GM12878 (cell line): ENCODE measurements at regions of chr14 and their contacts with region 1.

Region 1: GRCh38 chr14:70665191-70665916 is 23.6 kb downstream of the TTC9 start:
- DNase-seq: peak; percentile 90
- ATAC-seq: peak; percentile 73
- H3K4me3 ChIP-seq: peak overlapping the region; percentile 31; the same call in 1 of the 2 replicates
- H3K27ac ChIP-seq: peak overlapping the region; percentile 89
- H3K4me1 ChIP-seq: peaks cover 87% of the 10 kb centered on the region
- H3K27me3 ChIP-seq: no peaks in the 10 kb centered on the region
- CTCF ChIP-seq: no peak
- EP300 ChIP-seq: peak in 1 of 2 experiments; percentile 72; a peak in 1 of 4 replicates
- POLR2A ChIP-seq: 0 out of 2 replicates have a peak, but pooled peaks have one; percentile 39
- RAD21 ChIP-seq: no peak

Region 2: DNA sequence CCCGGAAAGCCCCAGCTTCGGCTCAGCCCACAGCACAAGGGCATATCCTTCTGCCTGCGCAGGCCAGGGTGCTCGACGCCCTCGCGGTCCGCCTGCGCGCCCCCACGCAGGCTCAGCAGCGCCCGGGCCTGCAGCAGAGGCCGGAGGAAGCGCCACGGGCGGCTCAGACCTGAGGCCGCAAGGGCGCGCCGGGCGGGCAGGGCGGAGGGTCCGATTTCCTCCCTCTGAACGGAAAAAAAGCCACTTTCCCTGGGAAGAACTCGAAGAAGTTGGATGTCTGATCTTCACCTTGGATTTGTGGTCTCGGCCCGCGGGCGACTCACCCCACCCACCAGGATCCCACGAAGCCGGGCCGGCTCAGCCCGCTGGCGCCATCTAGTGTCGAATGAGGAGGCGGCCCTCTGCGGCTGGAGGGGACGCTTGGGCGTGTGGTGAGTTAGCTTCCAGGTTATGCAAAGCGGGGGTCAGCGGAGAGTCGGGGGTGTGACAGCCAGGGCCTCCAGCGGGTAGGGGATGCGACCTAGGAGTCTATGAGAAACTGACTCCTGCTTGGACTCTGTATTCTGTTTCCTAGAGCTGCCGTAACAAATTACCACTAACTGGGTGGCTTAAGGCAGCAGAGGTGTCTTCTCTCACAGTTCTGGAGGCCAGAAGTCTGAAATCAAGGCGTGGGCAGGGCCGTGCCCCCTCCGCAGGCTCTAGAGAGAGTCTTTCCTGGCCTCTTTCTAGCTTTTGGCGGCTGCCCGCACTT is 938.4 kb before region 1 on chr14:
- CTCF ChIA-PET with region 1: no interaction called
- POLR2A ChIA-PET with region 1: no interaction called
- RAD21 ChIA-PET with region 1: no interaction called
- SMC1A ChIA-PET with region 1: no interaction called
- in situ Hi-C with region 1: no loop called
- intact Hi-C with region 1: no loop called
- DNase-seq: peak; percentile 19
- ATAC-seq: peak; percentile 97
- H3K4me3 ChIP-seq: peak overlapping the region; percentile 58; the same call in 1 of the 2 replicates
- H3K27ac ChIP-seq: no peak overlapping the region
- H3K4me1 ChIP-seq: peaks cover 4% of the 10 kb centered on the region; the same call in 1 of the 2 replicates
- H3K27me3 ChIP-seq: no peaks in the 10 kb centered on the region
- CTCF ChIP-seq: peak; percentile 94 to 98 (median 96)
- EP300 ChIP-seq: no peak
- POLR2A ChIP-seq: no peak
- RAD21 ChIP-seq: peak; percentile 99

Region 3: GRCh38 chr14:70640938-70641547 is 24.3 kb before region 1 on chr14:
- CTCF ChIA-PET with region 1: interaction called, 20 read pairs
- POLR2A ChIA-PET with region 1: interaction called, 145 read pairs
- RAD21 ChIA-PET with region 1: interaction called, 71 read pairs
- SMC1A ChIA-PET with region 1: interaction called, 254 read pairs
- in situ Hi-C with region 1: no loop called
- intact Hi-C with region 1: loop called (anchors 2 kb)
- DNase-seq: peak; percentile 60
- ATAC-seq: peak; percentile 77
- H3K4me3 ChIP-seq: peak overlapping the region; percentile 90
- H3K27ac ChIP-seq: peak overlapping the region; percentile 88
- H3K4me1 ChIP-seq: no peaks in the 10 kb centered on the region
- H3K27me3 ChIP-seq: no peaks in the 10 kb centered on the region
- CTCF ChIP-seq: peak in 2 of 3 experiments; percentile 10 to 14; a peak in 2 of 6 replicates
- EP300 ChIP-seq: 0 out of 4 replicates have a peak, but pooled peaks of 1 of the 2 experiments have one; percentile 32
- POLR2A ChIP-seq: peak; percentile 76
- RAD21 ChIP-seq: no peak

Region 4: GRCh38 chr14:70646705-70647104 is 18.6 kb before region 1 on chr14:
- CTCF ChIA-PET with region 1: interaction called, 20 read pairs
- POLR2A ChIA-PET with region 1: interaction called, 145 read pairs
- RAD21 ChIA-PET with region 1: interaction called, 149 read pairs
- SMC1A ChIA-PET with region 1: interaction called, 254 read pairs
- in situ Hi-C with region 1: no loop called
- intact Hi-C with region 1: loop called (anchors 2 kb)
- DNase-seq: no peak
- ATAC-seq: no peak
- H3K4me3 ChIP-seq: peak overlapping the region; percentile 90
- H3K27ac ChIP-seq: peak overlapping the region; percentile 24; the same call in 1 of the 2 replicates
- H3K4me1 ChIP-seq: peaks cover 4% of the 10 kb centered on the region
- H3K27me3 ChIP-seq: no peaks in the 10 kb centered on the region
- CTCF ChIP-seq: no peak
- EP300 ChIP-seq: no peak
- POLR2A ChIP-seq: no peak
- RAD21 ChIP-seq: no peak

Region 5: DNA sequence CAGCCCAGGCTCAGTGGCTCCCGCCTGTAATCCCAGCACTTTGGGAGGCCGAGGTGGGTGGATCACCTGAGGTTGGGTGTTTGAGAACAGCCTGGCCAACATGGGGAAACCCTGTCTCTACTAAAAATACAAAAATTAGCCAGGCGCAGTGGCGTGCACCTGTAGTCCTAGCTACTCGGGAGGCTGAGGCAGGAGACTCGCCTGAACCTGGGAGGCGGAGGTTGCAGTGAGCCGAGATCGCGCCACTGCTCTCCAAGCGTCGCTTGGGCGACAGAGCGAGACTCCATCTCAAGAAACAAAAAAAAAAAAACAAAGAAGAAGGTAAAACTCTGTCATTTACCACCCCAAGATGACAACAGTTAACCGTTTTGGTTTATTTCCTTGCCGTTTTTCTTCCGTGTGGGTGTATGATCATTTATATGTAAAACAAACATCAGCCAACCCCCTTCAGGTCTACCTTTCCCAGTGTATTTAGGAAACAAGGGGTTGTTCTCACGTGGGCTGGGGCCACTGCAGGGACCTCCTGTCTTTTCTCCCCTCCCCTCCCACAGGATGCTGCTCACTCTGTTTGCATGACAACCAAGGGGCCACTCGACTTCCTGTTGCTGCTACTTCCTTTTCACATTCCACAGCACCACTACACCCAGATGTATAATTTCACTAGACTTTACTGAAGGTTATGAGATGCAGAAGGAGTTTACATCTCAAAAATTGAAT is 10.1 kb before region 1 on chr14:
- CTCF ChIA-PET with region 1: interaction called, 66 read pairs
- POLR2A ChIA-PET with region 1: interaction called, 95 read pairs
- RAD21 ChIA-PET with region 1: interaction called, 149 read pairs
- SMC1A ChIA-PET with region 1: interaction called, 125 read pairs
- in situ Hi-C with region 1: no loop called
- intact Hi-C with region 1: no loop called
- DNase-seq: peak; percentile 88
- ATAC-seq: peak; percentile 87
- H3K4me3 ChIP-seq: peak overlapping the region; percentile 61
- H3K27ac ChIP-seq: peak overlapping the region; percentile 99
- H3K4me1 ChIP-seq: peaks cover 73% of the 10 kb centered on the region
- H3K27me3 ChIP-seq: no peaks in the 10 kb centered on the region
- CTCF ChIP-seq: no peak
- EP300 ChIP-seq: peak in 1 of 2 experiments; percentile 21; a peak in 1 of 4 replicates
- POLR2A ChIP-seq: 0 out of 2 replicates have a peak, but pooled peaks have one; percentile 35
- RAD21 ChIP-seq: no peak

Region 6: DNA sequence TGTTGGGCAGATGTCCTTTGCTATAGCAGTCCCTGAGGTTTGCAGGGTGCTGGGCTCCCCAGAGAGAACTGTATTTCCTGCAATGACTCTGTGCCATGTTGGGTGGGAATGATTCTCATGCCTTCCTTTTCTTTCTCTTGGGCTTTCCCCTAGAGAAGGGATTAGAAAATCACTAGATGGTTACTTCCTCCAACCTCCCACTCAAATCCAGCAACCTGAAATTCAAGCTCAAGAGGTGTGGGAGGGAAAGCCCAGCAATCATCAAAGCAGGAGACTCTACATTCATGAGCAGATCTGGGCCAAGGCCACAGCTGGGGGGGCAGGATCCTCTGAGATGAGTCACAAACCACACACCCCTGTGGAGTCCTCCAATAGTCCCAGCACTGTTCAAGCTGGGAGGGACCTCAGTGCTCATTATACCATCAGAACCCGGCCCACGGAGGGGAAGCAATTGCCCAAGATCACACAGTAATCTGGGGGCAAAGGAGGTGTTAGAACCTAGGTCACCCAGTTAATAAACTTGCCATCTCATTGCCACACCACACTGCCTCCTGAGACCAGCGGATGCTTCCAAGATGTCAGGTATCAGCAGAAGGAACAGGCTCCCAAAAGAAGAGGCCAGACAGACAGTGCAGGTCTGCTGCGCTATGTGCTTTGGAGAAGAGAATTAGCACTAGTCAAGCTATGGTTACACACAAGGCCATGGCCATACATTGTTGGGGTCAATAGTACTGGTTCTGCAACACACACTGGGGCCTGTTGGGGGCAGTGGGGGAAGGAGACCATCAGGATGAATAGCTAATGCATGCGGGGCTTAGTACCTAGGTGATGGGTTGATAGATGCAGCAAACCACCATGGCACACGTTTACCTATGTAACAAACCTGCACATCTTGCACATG is 42.0 kb after region 1 on chr14:
- CTCF ChIA-PET with region 1: interaction called, 25 read pairs
- POLR2A ChIA-PET with region 1: interaction called, 11 read pairs
- RAD21 ChIA-PET with region 1: interaction called, 66 read pairs
- SMC1A ChIA-PET with region 1: interaction called, 154 read pairs
- in situ Hi-C with region 1: no loop called
- intact Hi-C with region 1: loop called (anchors 1 kb)
- DNase-seq: peak; percentile 93
- ATAC-seq: peak; percentile 97
- H3K4me3 ChIP-seq: no peak overlapping the region
- H3K27ac ChIP-seq: peak overlapping the region; percentile 76
- H3K4me1 ChIP-seq: peaks cover 20% of the 10 kb centered on the region
- H3K27me3 ChIP-seq: no peaks in the 10 kb centered on the region
- CTCF ChIP-seq: no peak
- EP300 ChIP-seq: peak; percentile 37 to 50; a peak in 1 of 4 replicates
- POLR2A ChIP-seq: no peak
- RAD21 ChIP-seq: 0 out of 2 replicates have a peak, but pooled peaks have one; percentile 2

Region 7: DNA sequence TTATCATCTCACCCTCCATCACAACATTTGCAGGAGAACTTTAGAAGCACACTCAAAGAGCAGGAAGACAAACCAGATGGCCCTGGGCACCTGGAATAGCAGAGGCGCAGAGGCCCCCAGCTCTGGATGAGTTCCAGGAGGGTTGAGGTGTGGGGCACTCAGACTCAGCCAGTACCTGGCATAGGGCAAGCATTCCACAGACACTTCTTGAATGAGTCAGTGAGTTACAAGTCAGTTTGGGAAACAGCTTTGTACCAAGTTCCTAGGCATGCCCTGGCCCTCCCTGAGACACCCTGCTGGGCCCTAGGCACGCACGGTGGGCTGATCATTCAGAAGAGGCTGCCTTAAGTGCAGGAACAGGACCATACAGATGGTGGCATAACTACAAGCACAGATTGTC is 89.6 kb after region 1 on chr14:
- CTCF ChIA-PET with region 1: no interaction called
- POLR2A ChIA-PET with region 1: no interaction called
- RAD21 ChIA-PET with region 1: no interaction called
- SMC1A ChIA-PET with region 1: no interaction called
- in situ Hi-C with region 1: no loop called
- intact Hi-C with region 1: no loop called
- DNase-seq: no peak
- ATAC-seq: no peak
- H3K4me3 ChIP-seq: no peak overlapping the region
- H3K27ac ChIP-seq: no peak overlapping the region
- H3K4me1 ChIP-seq: no peaks in the 10 kb centered on the region
- H3K27me3 ChIP-seq: no peaks in the 10 kb centered on the region
- CTCF ChIP-seq: no peak
- EP300 ChIP-seq: no peak
- POLR2A ChIP-seq: no peak
- RAD21 ChIP-seq: no peak

Region 8: DNA sequence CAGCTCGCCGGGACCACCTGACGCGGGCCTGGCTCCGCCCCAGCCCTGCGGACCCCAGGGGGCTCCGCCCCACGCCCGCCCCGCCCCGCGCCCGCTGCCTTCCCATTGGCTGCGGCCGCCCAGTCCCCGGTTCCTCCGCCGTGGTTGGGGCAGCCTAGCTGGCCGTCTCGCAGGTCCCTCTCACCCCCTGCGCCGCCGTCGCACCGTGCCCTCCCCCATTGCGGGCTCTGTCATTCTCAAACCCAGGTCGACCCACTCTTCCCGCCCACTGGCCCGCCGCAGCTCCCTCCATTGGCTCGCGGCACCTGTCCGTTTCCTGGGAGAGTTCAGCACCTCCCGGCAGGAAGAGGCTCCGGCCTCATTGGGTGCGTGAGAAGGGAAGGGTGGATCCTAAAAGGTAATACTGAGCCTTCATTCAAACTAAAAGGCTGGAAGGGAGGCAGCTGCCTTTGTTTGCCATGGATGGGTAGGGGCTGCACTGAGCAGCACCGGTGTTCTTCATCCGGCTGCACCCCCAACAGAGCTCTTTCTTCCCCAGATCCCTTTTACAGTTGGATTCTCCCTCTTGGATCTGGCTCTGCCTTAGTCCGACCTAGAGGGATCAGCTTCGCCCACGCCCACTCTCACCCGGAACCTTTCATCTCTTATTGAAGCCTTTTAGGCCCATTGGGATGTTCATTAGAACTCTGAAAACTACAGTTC is 144.3 kb after region 1 on chr14:
- CTCF ChIA-PET with region 1: interaction called, 4 read pairs
- POLR2A ChIA-PET with region 1: interaction called, 3 read pairs
- RAD21 ChIA-PET with region 1: interaction called, 6 read pairs
- SMC1A ChIA-PET with region 1: no interaction called
- in situ Hi-C with region 1: no loop called
- intact Hi-C with region 1: loop called (anchors 5 kb)
- DNase-seq: peak; percentile 89
- ATAC-seq: peak; percentile 93
- H3K4me3 ChIP-seq: peak overlapping the region; percentile 90
- H3K27ac ChIP-seq: peak overlapping the region; percentile 60
- H3K4me1 ChIP-seq: peaks cover 23% of the 10 kb centered on the region
- H3K27me3 ChIP-seq: no peaks in the 10 kb centered on the region
- CTCF ChIP-seq: no peak
- EP300 ChIP-seq: no peak
- POLR2A ChIP-seq: peak; percentile 52; the same call in 1 of the 2 replicates
- RAD21 ChIP-seq: no peak

Region 9: GRCh38 chr14:70887207-70887681 is 221.9 kb after region 1 on chr14:
- CTCF ChIA-PET with region 1: no interaction called
- POLR2A ChIA-PET with region 1: interaction called, 3 read pairs
- RAD21 ChIA-PET with region 1: no interaction called
- SMC1A ChIA-PET with region 1: no interaction called
- in situ Hi-C with region 1: no loop called
- intact Hi-C with region 1: loop called (anchors 5 kb)
- DNase-seq: peak; percentile 71
- ATAC-seq: peak; percentile 72
- H3K4me3 ChIP-seq: peak overlapping the region; percentile 56
- H3K27ac ChIP-seq: peak overlapping the region; percentile 98
- H3K4me1 ChIP-seq: peaks cover 65% of the 10 kb centered on the region
- H3K27me3 ChIP-seq: no peaks in the 10 kb centered on the region
- CTCF ChIP-seq: no peak
- EP300 ChIP-seq: peak in 1 of 2 experiments; percentile 54; a peak in 1 of 4 replicates
- POLR2A ChIP-seq: no peak
- RAD21 ChIP-seq: no peak